ENCODE measurements at regions of chr9 and their contacts with region 1.

Region 1: DNA sequence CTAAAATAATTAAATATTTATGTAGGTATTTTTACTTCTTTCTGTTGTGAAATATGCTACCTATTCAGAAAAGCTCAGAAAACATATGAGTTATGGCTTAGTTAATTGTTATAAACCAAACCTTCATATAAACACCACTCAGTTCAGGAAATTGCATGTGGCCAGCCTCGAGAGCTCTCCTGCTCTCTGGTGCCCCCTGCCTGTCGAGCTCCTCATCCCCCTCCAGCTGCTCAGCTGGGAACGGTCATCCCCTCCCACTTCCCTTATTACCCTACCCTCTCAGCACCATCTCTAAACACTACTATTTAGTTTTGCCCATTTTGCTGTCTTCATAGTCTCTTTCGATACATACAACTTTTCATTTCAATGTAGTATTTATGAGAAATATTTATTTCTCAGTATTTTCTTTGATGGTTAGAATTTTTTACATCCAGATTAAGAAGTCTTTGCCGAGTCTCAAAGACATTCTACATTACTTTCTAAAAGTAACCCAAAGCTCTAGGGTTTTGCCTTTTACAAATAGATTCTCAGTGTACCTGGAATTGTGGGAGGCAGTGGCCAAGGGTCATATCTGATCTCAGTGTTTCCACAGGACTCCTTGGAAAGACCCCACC is 51.2 kb upstream of the SEMA4D start:
- DNase-seq: peak; percentile 81 to 88 (median 83)
- H3K4me3 ChIP-seq: no peak overlapping the region
- H3K27ac ChIP-seq: no peak overlapping the region
- H3K4me1 ChIP-seq: peaks cover 0 to 21% (median 12%) of the 10 kb centered on the region in 4 experiments
- H3K27me3 ChIP-seq: no peaks in the 10 kb centered on the region

Region 2: DNA sequence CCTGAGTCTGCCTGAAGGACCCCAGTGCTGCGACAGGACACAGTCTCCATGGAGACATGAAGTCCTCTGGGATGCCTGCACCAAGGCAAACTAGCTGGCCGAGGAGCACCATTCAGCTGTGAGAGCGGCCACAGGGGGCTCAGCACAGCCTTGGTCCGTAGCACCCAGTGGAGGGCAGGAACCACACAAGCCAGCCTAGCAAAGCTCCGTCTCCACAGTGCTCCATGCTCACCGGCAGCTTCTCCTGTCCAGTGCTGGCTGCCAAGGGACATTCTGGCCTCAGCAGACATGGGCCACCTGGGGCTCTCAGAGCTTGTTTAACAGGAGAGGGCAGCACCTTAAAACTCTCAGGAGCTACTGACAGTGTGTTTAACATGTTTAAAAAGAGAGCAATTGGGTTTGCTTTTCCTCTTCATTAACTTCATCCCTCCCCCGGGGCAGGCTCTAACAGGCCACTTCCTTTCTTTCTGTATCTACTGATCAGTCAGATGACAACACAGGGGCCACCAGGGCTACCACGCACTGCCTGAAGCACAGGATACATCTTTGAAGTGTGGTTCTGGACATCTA is 173.9 kb before region 1 on chr9:
- CTCF ChIA-PET with region 1: interaction called, 10 read pairs
- POLR2A ChIA-PET with region 1: no interaction called
- DNase-seq: peak; percentile 75 to 94 (median 91)
- H3K4me3 ChIP-seq: peak overlapping the region in 4 of 7 experiments; percentile 26 to 66 (median 40)
- H3K27ac ChIP-seq: peak overlapping the region; percentile 68 to 75
- H3K4me1 ChIP-seq: peaks cover 8 to 45% (median 35%) of the 10 kb centered on the region in 4 experiments
- H3K27me3 ChIP-seq: no peaks in the 10 kb centered on the region

Region 3: DNA sequence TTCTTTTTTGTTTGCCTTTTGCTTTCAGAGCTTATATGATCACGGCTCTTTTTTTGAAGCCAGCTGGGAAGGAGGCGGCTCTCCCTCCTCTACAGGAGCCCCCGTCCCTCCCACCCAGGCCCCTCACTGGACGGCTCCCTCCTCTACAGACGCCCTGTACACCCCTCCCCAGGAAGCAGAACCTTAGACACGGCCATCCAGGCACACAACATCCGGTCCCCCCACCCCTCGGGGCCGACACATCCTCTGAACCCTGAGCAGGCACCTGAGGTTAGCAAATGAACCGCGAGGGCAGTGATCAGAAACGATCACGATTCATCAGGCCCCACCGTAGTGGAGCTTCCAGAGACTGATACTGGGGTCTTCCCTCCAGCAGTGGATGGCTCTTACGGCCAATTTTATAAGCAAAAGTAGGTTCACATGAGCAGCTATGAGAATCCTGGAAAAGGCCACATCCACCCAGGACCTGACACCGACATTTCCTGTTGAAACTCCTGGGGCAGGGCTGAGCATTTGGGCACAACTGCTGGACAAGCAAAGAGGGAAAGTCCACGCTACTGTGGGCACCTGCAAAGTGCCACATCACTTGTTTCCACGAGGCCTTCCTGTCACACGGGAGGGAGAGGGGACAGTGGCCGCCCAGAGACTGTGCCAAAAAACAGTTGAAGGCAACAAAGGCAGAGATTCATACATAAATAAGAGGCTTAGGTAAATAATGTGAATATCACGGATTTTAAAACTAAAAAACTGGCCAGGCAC is 130.1 kb before region 1 on chr9:
- CTCF ChIA-PET with region 1: interaction called, 106 read pairs
- POLR2A ChIA-PET with region 1: interaction called, 3 read pairs
- DNase-seq: peak in 2 of 3 donors; percentile 70 to 82
- H3K4me3 ChIP-seq: peak overlapping the region in 3 of 7 experiments; percentile 0 to 21 (median 6)
- H3K27ac ChIP-seq: peak overlapping the region in 1 of 2 experiments; percentile 40
- H3K4me1 ChIP-seq: peaks cover 6 to 82% (median 68%) of the 10 kb centered on the region in 4 experiments
- H3K27me3 ChIP-seq: no peaks in the 10 kb centered on the region

Region 4: GRCh38 chr9:89442981-89443814 is 105.9 kb before region 1 on chr9:
- CTCF ChIA-PET with region 1: interaction called, 20 read pairs
- POLR2A ChIA-PET with region 1: no interaction called
- DNase-seq: peak in 2 of 3 donors; percentile 59 to 65
- H3K4me3 ChIP-seq: no peak overlapping the region
- H3K27ac ChIP-seq: no peak overlapping the region
- H3K4me1 ChIP-seq: peaks cover 0 to 61% (median 49%) of the 10 kb centered on the region in 4 experiments
- H3K27me3 ChIP-seq: no peaks in the 10 kb centered on the region

Region 5: DNA sequence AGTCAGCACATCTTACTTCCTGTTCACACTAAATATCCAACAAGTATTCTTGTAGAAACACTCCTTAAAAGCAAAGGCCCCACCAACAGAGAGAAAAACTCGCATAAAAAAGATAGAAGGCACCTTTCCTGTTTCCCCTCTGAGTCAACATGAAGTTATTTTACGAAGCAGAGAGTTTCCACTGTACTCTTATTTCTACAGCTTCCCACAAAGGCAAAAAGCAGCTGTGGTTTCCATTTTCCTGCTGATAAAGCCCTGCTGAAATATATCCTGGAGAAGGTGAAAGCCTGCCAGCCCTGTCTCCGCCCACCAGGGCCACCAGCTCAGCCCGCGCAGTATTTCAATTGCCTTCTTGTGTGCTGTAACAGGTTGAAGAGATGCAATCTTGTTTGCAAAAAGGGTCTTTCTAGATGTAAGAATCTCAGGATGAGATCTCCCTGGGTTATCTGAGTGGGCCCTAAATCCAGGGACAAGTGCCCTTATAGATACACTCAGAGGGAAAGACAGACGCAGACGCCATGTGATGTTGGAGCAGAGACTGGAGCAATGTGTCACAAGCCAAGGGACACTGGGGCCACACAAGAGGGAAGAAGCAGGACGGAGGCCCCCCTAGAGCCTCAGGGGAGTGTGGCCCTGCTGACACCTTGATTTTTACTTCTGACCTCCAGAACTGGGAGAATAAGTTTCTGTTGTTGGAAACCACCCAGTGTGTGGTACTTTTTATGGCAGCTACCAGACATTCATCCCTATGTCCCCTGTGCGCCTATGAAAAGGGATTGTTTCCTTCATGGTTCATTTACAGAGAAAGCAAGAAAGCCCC is 71.1 kb before region 1 on chr9:
- CTCF ChIA-PET with region 1: interaction called, 12 read pairs
- POLR2A ChIA-PET with region 1: no interaction called
- DNase-seq: peak; percentile 88 to 95 (median 91)
- H3K4me3 ChIP-seq: peak overlapping the region in 5 of 7 experiments; percentile 9 to 60 (median 50)
- H3K27ac ChIP-seq: peak overlapping the region; percentile 25 to 33
- H3K4me1 ChIP-seq: peaks cover 30 to 84% (median 77%) of the 10 kb centered on the region in 4 experiments
- H3K27me3 ChIP-seq: no peaks in the 10 kb centered on the region

Region 6: DNA sequence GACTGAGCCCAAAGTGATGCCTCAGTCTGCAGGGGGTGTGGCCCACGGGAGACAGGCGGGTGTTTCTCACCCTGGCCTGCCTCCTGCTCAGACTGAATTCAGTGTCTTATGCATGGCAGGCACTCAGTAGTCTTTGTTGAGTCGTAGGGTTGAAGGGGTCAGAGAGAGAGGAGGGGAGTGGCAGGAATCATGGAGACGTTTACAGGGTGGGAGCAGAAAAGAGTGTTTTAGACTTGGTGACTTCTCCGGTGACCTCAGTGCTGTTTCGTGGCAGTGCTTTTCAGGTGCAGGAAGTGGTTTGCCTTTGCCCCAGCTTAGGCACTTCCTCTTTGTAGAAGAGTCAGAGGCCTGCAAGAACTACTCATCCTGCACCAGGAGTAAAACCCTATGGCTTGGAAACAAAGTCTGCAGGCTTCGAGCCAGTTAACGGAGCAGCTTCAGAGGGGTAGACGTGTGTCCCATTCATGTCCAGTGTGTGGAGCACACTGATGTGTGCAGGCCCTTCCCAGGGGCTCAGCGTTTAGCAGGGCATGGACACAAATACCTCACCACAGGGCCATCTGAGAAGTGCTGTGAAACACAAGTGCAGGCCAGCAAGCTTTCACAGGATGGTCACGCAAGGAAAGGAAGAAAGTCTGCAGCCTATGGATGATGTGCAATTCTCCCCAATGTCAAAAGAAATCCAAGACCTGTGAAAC is 26.7 kb before region 1 on chr9:
- CTCF ChIA-PET with region 1: interaction called, 41 read pairs
- POLR2A ChIA-PET with region 1: no interaction called
- DNase-seq: peak; percentile 85 to 97 (median 94)
- H3K4me3 ChIP-seq: peak overlapping the region in 2 of 7 experiments; percentile 19 to 53
- H3K27ac ChIP-seq: peak overlapping the region in 1 of 2 experiments; percentile 59
- H3K4me1 ChIP-seq: peaks cover 31 to 91% (median 69%) of the 10 kb centered on the region in 4 experiments
- H3K27me3 ChIP-seq: no peaks in the 10 kb centered on the region

Region 7: GRCh38 chr9:89576404-89576839 is 27.3 kb after region 1 on chr9:
- CTCF ChIA-PET with region 1: no interaction called
- POLR2A ChIA-PET with region 1: no interaction called
- DNase-seq: peak; percentile 63 to 74 (median 69)
- H3K4me3 ChIP-seq: no peak overlapping the region
- H3K27ac ChIP-seq: no peak overlapping the region
- H3K4me1 ChIP-seq: peaks cover 4 to 24% (median 17%) of the 10 kb centered on the region in 4 experiments
- H3K27me3 ChIP-seq: no peaks in the 10 kb centered on the region

Region 8: DNA sequence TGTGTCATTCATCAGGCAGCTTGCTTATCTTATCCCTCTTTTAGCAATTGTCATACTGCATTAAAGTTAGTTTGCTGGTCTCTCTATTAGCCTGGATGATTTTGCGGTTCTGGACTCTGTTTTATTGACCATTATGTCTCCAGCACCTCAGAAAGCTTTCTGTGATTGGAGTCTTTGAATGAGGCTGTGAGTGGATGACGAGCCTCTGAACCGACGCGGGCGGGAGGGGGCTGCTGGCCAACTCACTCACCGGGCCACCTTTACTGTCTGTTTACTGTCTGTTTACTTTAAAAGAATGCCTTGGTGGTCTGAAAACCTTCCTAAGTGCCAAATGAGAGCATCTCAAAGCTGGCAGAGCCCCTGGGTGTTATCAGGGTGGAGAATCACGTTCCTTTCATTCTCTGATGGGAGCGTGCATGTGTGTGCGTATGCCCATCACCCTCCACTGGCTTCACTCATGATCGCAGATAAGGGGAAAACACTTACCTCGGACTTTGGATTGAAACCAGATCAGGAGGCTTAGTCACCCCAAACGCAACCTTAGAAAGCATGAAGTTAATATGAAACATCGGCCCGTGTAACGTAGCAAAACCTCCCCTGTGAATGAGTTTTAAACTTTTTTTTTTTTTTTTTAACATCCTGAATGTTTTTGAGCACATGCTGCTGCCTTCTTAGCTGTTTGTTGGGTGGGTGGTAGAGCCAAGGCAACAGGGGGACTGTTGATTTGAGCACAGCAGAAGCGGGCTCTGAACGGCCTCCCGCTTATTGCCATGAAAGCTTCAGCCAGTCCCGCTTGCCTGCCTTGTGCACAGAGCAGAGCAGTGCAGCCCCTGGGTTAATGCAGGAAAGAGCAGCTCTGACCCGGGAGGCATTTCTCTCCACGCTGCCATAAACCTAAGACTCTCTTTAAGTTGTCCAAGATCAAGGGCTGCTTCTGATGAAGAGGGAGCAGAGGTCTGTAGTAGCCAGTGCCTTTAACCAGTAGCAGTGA is 229.3 kb after region 1 on chr9:
- CTCF ChIA-PET with region 1: no interaction called
- POLR2A ChIA-PET with region 1: no interaction called
- DNase-seq: no peak
- H3K4me3 ChIP-seq: no peak overlapping the region
- H3K27ac ChIP-seq: no peak overlapping the region
- H3K4me1 ChIP-seq: peaks cover 0 to 14% (median 12%) of the 10 kb centered on the region in 4 experiments
- H3K27me3 ChIP-seq: peaks cover 0 to 2% (median 0%) of the 10 kb centered on the region in 5 experiments